Mammary epithelial cell (primary cell): ENCODE measurements at regions of chr3 and their contacts with region 1.

Region 1: DNA sequence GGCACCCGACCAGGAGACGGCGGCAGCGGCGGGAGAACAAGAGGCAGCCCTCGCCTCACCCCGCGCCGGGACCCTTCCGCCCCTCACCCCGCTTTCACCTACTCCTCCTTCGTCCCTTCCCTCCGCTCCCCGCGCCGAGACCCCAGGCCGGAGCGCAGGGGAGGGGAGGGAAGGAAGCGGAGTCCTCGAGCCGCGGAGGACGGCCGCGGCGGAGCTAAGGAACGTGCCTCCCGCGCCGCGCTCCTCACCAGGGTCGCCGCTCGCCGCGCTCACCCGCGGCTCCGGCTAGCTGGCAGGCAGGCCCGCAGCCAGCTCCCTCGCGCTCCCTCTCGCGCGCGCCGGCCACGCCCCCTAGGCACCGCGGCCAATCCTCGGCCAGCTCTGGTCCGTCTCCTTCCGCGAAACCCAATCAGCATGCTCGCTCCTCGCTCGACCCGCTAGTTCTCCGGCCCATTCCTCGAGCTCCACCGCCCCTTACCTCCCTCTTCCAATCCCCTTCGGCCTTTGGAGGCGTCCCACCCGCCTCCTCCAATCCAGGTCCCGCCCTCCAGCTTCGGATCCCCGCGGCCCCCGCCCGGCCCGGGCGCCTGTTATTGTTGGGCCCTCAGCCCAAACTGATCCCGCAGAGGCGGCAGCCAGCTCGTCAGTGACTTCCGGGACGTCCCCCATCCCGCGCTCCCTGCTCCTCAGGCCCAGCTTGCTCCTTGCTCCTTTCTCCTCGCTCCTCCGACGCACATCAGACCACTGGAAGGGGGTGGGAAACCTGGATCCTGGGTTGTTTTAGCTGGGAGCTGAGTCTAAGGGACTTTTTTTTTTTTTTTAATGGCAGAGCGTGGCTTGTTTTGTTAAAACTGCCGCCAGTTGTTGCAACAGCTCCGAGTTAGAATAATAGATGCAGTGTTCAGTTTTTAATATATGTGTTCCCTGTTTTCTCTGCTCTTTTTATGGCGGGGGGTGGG is at the start of gene DCBLD2:
- DNase-seq: peak; percentile 100
- H3K4me3 ChIP-seq: peak within 1 kb of the TSS; percentile 83 to 94 (median 93)
- H3K27ac ChIP-seq: peak within 1 kb of the TSS; percentile 74
- H3K4me1 ChIP-seq: peaks cover 24% of the 10 kb centered on the region
- H3K27me3 ChIP-seq: no peaks in the 10 kb centered on the region
- CTCF ChIP-seq: no peak
- total RNA-seq, gene DCBLD2: 310 to 337 TPM

Region 2: GRCh38 chr3:98817547-98818041 is 84.1 kb before region 1 on chr3:
- CTCF ChIA-PET with region 1: interaction called, 4 read pairs
- dilution Hi-C with region 1: no loop called
- in situ Hi-C with region 1: no loop called
- intact Hi-C with region 1: loop called (anchors 5 kb)
- DNase-seq: no peak
- H3K4me3 ChIP-seq: no peak overlapping the region
- H3K27ac ChIP-seq: no peak overlapping the region
- H3K4me1 ChIP-seq: peaks cover 3% of the 10 kb centered on the region
- H3K27me3 ChIP-seq: no peaks in the 10 kb centered on the region
- CTCF ChIP-seq: peak; percentile 57 to 69

Region 3: GRCh38 chr3:98884675-98885371 is 16.8 kb before region 1 on chr3:
- CTCF ChIA-PET with region 1: no interaction called
- dilution Hi-C with region 1: no loop called
- in situ Hi-C with region 1: no loop called
- intact Hi-C with region 1: loop called (anchors 2 kb)
- DNase-seq: no peak
- H3K4me3 ChIP-seq: peak overlapping the region in 2 of 3 experiments; percentile 13 to 29
- H3K27ac ChIP-seq: no peak overlapping the region
- H3K4me1 ChIP-seq: peaks cover 34% of the 10 kb centered on the region
- H3K27me3 ChIP-seq: no peaks in the 10 kb centered on the region
- CTCF ChIP-seq: no peak

Region 4: DNA sequence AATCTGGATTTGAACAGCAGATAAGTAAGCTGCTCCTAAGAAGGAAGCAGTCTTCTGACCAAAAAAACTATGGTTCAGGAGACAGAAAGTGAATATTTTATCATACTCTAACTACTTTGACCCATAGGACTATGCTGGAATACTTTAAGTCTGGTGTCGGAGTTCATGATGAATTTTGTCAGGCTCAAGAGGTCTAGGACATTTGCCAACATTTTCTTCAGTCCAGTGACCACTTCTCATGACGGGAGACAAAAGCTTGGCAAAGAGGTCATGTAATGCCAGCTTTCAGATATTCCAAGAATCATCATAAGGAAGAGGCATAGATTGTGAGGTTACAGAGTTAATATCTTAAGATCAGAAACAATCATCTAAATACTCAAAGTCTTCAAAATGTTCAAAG is 20.3 kb after region 1 on chr3:
- CTCF ChIA-PET with region 1: interaction called, 4 read pairs
- dilution Hi-C with region 1: no loop called
- in situ Hi-C with region 1: no loop called
- intact Hi-C with region 1: loop called (anchors 1 kb)
- DNase-seq: no peak
- H3K4me3 ChIP-seq: no peak overlapping the region
- H3K27ac ChIP-seq: no peak overlapping the region
- H3K4me1 ChIP-seq: peaks cover 34% of the 10 kb centered on the region
- H3K27me3 ChIP-seq: no peaks in the 10 kb centered on the region
- CTCF ChIP-seq: no peak

Region 5: GRCh38 chr3:98954791-98955604 is 53.3 kb after region 1 on chr3:
- CTCF ChIA-PET with region 1: no interaction called
- dilution Hi-C with region 1: no loop called
- in situ Hi-C with region 1: no loop called
- intact Hi-C with region 1: no loop called
- DNase-seq: peak; percentile 74
- H3K4me3 ChIP-seq: no peak overlapping the region
- H3K27ac ChIP-seq: peak overlapping the region; percentile 19
- H3K4me1 ChIP-seq: peaks cover 22% of the 10 kb centered on the region
- H3K27me3 ChIP-seq: no peaks in the 10 kb centered on the region
- CTCF ChIP-seq: no peak

Region 6: GRCh38 chr3:98971183-98971681 is 69.6 kb after region 1 on chr3:
- CTCF ChIA-PET with region 1: no interaction called
- dilution Hi-C with region 1: no loop called
- in situ Hi-C with region 1: loop called in 1 of 2 experiments (anchors 10 kb)
- intact Hi-C with region 1: loop called (anchors 2 kb)
- DNase-seq: peak; percentile 96
- H3K4me3 ChIP-seq: no peak overlapping the region
- H3K27ac ChIP-seq: peak overlapping the region; percentile 95
- H3K4me1 ChIP-seq: peaks cover 46% of the 10 kb centered on the region
- H3K27me3 ChIP-seq: no peaks in the 10 kb centered on the region
- CTCF ChIP-seq: no peak

Region 7: GRCh38 chr3:98980915-98981596 is 79.4 kb after region 1 on chr3:
- CTCF ChIA-PET with region 1: no interaction called
- dilution Hi-C with region 1: loop called (anchors 10 kb)
- in situ Hi-C with region 1: loop called (anchors 5 to 10 kb)
- intact Hi-C with region 1: loop called (anchors 1 kb)
- DNase-seq: peak; percentile 93
- H3K4me3 ChIP-seq: peak overlapping the region; percentile 34 to 83 (median 73)
- H3K27ac ChIP-seq: peak overlapping the region; percentile 81
- H3K4me1 ChIP-seq: peaks cover 45% of the 10 kb centered on the region
- H3K27me3 ChIP-seq: no peaks in the 10 kb centered on the region
- CTCF ChIP-seq: no peak

Region 8: GRCh38 chr3:99084826-99085225 is 183.2 kb after region 1 on chr3:
- CTCF ChIA-PET with region 1: no interaction called
- dilution Hi-C with region 1: no loop called
- in situ Hi-C with region 1: no loop called
- intact Hi-C with region 1: no loop called
- DNase-seq: peak; percentile 90
- H3K4me3 ChIP-seq: peak overlapping the region in 1 of 3 experiments; percentile 20
- H3K27ac ChIP-seq: peak overlapping the region; percentile 31
- H3K4me1 ChIP-seq: peaks cover 20% of the 10 kb centered on the region
- H3K27me3 ChIP-seq: no peaks in the 10 kb centered on the region
- CTCF ChIP-seq: no peak